ENCODE measurements at regions of chr3 and their contacts with region 1.

Region 1: DNA sequence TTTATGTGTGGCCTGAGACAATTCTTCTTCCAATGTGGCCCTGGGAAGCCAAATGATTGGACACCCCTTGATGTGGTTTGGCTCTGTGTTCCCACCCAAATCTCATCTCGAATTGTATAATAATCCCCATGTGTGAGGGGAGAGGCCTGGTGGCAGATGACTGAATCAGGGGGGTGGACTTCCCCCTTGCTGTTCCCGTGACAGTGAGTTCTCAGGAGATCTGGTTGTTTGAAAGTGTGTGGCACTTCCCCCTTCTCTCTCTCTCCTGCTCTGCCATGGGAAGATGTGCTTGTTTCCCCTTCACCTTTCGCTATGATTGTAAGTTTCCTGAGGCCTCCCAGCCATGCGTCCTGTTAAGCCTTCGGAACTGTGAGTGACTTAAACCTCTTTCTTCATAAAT is 60.1 kb upstream of the PARL start:
- DNase-seq: no peak
- CTCF ChIP-seq: no peak

Region 2: GRCh38 chr3:183912895-183913579 is 31.7 kb before region 1 on chr3:
- CTCF ChIA-PET with region 1: interaction called, 11 read pairs
- POLR2A ChIA-PET with region 1: no interaction called
- DNase-seq: no peak
- CTCF ChIP-seq: no peak

Region 3: DNA sequence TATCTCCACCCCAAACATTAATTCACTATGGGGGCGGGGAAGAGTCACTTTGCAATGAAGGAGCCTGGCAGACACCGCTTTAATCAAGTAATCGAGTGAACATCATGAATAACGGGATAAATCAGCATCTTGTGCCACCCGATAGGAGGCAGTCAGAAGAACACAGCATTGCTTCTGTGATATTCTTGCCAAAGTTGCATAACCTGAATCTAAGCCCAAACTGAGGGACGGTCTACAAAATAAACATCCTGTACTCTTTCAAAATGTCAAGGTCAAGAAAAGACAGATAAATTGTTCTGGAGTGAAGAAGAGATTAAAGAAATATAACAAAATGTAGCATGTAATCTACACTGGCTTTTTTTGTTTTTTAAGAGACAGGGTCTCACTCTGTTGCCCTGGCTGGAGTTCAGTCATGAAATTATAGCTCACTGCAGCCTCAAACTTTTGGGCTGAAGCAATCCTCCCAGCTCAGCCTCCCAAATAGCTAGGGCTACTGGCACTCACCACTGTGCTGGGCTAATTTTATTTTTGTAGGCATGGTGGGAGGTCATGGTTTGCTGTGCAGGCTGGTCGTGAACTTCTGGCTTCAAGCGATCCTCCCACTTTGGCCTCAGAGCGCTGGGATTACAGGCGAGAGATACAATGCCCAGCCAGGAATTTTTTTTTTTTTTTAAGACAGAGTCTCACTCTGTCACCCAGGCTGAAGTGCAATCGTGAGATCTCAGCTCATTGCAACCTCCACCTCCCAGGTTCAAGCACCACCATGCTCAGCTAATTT is 264.6 kb after region 1 on chr3:
- CTCF ChIA-PET with region 1: no interaction called
- POLR2A ChIA-PET with region 1: no interaction called
- DNase-seq: no peak
- CTCF ChIP-seq: no peak

Measured in GM10248 (cell line).